Activated CD4-positive, alpha-beta T cell treated with anti-CD3 and anti-CD28 coated beads, Interleukin-2, amount 10 ng/mL, durations not matched to agents 7 days and 5 days (primary cell): ENCODE measurements at regions of chr2 and their contacts with region 1.

Region 1: DNA sequence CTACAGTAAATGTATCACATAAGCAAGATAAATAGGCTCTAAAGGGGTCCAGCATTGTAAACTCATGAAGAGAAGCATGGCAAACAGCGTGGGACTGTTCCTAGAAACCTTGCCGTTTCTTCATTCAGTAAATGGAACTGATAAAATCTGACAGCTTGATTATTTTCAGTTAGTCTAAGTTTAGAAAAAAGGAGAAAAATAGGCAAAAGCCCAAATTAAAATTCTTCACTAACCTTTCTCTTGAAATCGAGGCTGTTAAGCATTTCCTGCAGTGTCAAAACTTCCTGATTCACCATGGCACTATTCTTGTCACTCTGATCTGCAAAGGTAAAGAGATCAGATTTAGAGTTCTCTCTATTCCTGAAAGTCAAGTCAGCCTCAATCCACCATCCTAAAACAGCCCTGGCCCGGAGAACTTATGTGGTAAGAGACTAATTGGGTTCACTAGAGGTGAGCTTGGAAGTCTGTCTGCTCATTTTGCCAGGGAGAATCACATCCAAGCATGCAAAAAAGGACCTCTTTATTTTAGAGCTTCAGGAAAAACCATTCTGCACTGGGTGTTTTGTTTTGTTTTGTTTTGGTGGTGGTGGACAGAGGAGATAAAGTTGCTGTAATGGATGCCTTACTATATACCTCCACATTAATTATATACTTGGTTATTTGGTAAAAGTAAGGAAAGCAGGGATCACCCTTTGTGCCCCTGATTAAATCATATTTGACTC is 52.4 kb upstream of the STAT1 start:
- DNase-seq: no peak
- H3K4me3 Mint-ChIP-seq: peak overlapping the region; percentile 73
- H3K27ac Mint-ChIP-seq: peak overlapping the region; percentile 87
- H3K4me1 Mint-ChIP-seq: peaks cover 80% of the 10 kb centered on the region
- H3K27me3 Mint-ChIP-seq: no peaks in the 10 kb centered on the region

Region 2: DNA sequence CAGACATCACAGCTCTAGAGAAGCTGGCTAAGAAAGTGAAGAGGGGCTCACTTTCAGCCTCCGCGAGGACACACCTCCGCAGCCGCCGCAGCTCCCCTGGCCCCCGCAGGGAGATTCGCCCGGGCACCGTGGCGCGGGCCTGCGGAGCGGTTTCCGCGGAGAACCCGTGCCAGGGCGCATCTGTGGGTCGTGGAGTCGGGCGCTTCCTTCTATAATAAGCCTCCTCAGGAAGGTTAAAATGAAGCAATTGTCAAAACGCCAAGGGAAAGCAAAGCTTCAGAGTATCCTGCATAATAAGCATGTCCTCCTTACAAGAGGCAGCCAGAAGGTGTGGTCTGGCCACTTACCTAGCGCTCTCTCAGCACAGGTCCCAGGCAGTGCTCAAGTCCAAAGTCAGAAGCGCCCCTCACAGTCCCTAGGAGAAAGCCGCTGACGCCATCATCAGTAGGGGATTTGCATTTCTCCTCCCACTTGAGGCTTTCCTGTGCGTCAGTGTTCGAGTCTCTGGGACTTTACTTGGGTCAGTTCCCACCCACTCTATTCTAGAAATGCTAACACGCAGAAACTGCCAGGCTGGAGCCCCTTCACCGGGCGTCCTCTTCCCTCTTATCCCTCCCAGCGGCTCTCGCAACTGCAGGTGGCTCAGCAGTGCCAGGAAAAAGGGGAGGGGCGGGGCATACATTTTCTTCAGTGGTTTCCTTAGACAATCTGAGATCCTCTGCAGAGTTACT is 84.4 kb after region 1 on chr2 and contains the start of gene STAT4:
- CTCF ChIA-PET with region 1: interaction called, 13 read pairs
- POLR2A ChIA-PET with region 1: interaction called, 3 read pairs
- DNase-seq: peak; percentile 85
- H3K4me3 Mint-ChIP-seq: peak within 1 kb of the TSS; percentile 93
- H3K27ac Mint-ChIP-seq: peak within 1 kb of the TSS; percentile 96
- H3K4me1 Mint-ChIP-seq: peaks cover 67% of the 10 kb centered on the region
- H3K27me3 Mint-ChIP-seq: no peaks in the 10 kb centered on the region
- total RNA-seq, gene STAT4: 72.6 to 84.4 TPM

Region 3: GRCh38 chr2:191255756-191256312 is 189.5 kb after region 1 on chr2:
- CTCF ChIA-PET with region 1: no interaction called
- POLR2A ChIA-PET with region 1: no interaction called
- DNase-seq: no peak
- H3K4me3 Mint-ChIP-seq: no peak overlapping the region
- H3K27ac Mint-ChIP-seq: no peak overlapping the region
- H3K4me1 Mint-ChIP-seq: no peaks in the 10 kb centered on the region
- H3K27me3 Mint-ChIP-seq: peaks cover 3% of the 10 kb centered on the region